Psoas muscle (tissue), 8 donors: ENCODE measurements at regions of chr1 and their contacts with region 1.

Region 1: GRCh38 chr1:209747580-209748262 is 8.1 kb upstream of the TRAF3IP3 start:
- DNase-seq: peak; percentile 92 to 95
- ATAC-seq: peak; percentile 100
- H3K4me3 ChIP-seq: peak overlapping the region; percentile 40
- H3K27ac ChIP-seq: peak overlapping the region; percentile 43
- H3K4me1 ChIP-seq: no peaks in the 10 kb centered on the region
- H3K27me3 ChIP-seq: no peaks in the 10 kb centered on the region
- CTCF ChIP-seq: peak; percentile 90

Region 2: GRCh38 chr1:209565759-209566678 is 181.7 kb before region 1 on chr1:
- intact Hi-C with region 1: loop called in 1 of 2 experiments (anchors 5 kb)
- DNase-seq: peak; percentile 70 to 73
- ATAC-seq: peak; percentile 57 to 87 (median 82)
- H3K4me3 ChIP-seq: no peak overlapping the region
- H3K27ac ChIP-seq: no peak overlapping the region
- H3K4me1 ChIP-seq: no peaks in the 10 kb centered on the region
- H3K27me3 ChIP-seq: peaks cover 0 to 7% (median 0%) of the 10 kb centered on the region in 3 donors
- CTCF ChIP-seq: peak; percentile 64

Region 3: DNA sequence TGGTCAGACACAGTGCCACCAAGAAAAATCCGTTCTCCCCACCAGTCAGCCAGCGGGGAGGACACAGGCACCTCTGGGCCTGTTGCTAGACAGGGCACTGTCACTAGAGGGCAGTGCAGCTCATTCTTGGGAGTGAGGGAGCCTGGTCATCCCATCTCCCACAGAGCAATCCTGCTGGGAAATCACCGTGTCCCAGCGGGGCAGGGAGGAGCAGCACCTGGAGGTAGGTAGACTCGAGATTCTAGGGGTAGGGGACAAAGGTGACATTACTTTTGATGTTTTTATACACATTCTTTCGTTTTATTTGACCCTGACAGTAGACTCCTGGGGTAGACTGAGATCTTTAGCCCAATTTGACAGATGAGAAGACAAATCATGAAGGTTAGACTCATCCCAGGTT is 170.9 kb before region 1 on chr1:
- intact Hi-C with region 1: loop called (anchors 2 to 5 kb)
- DNase-seq: peak; percentile 80 to 88
- ATAC-seq: peak; percentile 94 to 100 (median 98)
- H3K4me3 ChIP-seq: no peak overlapping the region
- H3K27ac ChIP-seq: no peak overlapping the region
- H3K4me1 ChIP-seq: peaks cover 3% of the 10 kb centered on the region
- H3K27me3 ChIP-seq: peaks cover 0 to 7% (median 3%) of the 10 kb centered on the region in 3 donors
- CTCF ChIP-seq: peak; percentile 95

Region 4: DNA sequence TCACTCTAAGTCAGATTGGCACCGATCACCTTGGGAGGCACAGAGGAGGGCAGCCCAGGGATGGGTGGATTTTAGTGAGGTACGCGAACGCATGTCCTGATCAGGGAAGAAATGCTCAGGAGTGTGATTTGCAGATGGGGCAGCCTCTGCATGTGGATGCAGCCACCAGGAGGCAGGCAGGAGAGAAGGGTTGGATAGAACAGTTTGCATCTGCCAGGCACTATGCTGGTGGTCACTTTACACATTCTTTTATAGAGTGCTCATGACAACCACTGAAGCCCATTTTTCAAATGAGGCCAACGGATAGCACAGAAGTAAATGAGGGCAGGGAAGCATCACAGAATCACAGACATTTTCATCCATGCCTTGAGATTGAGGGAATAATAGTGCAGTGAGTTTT is 101.2 kb before region 1 on chr1:
- intact Hi-C with region 1: no loop called
- DNase-seq: no peak
- ATAC-seq: peak in 2 of 4 donors; percentile 23 to 28
- H3K4me3 ChIP-seq: peak overlapping the region; percentile 39
- H3K27ac ChIP-seq: peak overlapping the region; percentile 46
- H3K4me1 ChIP-seq: peaks cover 69% of the 10 kb centered on the region
- H3K27me3 ChIP-seq: no peaks in the 10 kb centered on the region
- CTCF ChIP-seq: peak; percentile 25

Region 5: DNA sequence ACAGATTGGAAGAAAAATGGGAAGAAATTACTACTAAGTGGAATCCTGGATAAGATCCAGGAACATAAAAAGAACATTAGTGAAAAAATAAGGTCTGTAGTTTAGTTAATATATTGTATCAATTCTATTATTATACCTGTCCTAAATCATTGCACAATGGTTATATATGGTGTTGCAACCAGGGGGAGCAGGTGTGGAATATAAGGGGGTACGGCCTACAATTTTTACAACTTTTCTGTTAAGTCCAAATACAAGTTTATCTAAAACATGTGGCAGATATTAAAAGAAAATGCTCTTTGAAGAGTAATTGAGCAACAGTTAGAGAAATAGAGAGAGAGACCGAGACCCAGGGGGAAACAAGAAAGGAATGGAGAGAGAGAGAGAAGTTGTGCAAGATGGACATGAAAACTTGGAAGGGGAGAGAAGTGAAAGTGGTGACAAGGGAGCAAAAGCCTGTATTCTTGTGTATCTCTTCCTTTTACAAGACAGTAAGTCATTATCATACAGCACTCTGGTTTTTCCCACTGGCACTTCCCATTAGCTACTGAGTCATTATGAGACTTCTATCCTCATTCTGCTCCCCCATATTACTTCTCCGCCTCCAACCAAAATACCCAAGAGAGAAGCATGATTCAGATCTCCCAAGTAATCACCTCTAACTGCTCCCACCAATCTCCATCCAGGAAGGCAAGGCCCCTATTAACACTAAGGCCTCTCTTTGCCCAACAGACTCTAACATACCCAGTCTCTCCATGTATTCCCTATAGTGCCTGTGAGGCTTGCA is 14.1 kb before region 1 on chr1:
- intact Hi-C with region 1: no loop called
- DNase-seq: no peak
- ATAC-seq: peak in 3 of 4 donors; percentile 37 to 53 (median 46)
- H3K4me3 ChIP-seq: no peak overlapping the region
- H3K27ac ChIP-seq: no peak overlapping the region
- H3K4me1 ChIP-seq: no peaks in the 10 kb centered on the region
- H3K27me3 ChIP-seq: no peaks in the 10 kb centered on the region
- CTCF ChIP-seq: no peak

Region 6: DNA sequence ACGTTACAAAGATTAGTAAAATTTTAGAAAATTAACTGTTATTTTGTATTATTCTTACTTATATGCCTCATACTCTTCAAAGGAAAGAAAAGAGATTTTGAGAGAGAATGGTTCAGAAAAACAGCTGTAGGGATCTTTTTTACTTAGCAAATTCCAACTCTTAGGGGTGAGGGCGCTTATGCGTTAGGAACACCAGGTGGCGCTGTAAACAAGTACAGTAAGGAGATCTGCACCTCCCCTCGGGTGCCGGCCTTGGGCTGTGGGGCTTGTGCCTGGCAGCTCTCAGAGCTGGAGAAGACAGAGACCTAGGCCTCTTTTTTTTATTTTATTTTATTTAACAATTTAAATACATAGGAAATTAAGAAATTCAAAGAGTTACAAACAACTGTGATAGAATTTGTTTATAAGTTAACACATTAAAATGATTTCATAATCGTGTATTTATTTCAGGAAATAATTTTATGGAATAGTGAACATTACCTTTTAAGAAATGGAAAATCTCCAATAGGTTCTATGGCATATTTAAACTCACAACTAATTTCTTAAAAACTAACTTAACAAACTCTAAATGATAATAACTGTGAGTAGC is 112.7 kb after region 1 on chr1:
- intact Hi-C with region 1: no loop called
- DNase-seq: peak; percentile 71 to 78
- ATAC-seq: peak; percentile 58 to 81 (median 74)
- H3K4me3 ChIP-seq: no peak overlapping the region
- H3K27ac ChIP-seq: no peak overlapping the region
- H3K4me1 ChIP-seq: no peaks in the 10 kb centered on the region
- H3K27me3 ChIP-seq: peaks cover 0 to 7% (median 0%) of the 10 kb centered on the region in 3 donors
- CTCF ChIP-seq: peak; percentile 87